Spleen (tissue), 13 donors: ENCODE measurements at regions of chr14 and their contacts with region 1.

Region 1: DNA sequence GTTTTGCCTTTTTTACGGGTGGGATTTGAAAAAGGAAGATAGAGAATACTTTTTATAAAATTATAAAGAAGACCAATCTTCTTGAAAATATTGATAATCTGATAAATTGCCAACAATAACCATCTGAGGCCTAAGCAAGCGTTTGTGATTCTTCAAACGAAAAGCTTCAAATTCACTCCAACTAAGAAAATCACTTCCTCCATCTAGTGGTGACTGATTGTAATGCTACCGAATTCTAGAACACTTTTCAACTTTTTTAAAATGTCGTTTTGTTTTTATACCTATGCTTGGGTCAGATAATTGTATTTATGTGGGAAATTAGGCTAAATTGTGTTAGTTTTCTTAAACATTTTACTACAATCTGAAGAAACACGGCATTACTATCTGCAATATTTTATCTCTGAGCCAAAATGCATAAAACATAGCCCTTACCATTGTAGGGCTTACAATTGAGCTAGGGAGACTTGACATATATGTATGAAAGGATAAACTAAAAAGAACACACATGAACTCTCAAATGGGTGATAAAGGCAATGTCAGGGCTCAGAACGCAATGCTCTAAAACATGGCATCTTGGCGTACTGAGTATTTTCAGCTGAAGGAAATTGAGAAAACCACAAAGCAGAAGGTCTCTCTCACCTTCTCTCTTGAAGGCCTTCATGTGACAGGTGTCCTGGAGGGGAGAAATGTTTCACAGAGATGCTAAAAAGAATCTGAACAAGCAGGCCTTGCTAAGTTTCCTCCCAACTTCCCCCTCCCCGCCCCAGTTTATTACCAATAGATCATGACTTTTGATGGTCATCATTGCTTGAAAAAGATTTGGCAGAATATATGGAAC is 36.8 kb upstream of the G2E3 start:
- DNase-seq: no peak
- H3K4me3 ChIP-seq: no peak overlapping the region
- H3K27ac ChIP-seq: no peak overlapping the region
- H3K4me1 ChIP-seq: peaks cover 0 to 12% (median 2%) of the 10 kb centered on the region in 6 donors
- H3K27me3 ChIP-seq: no peaks in the 10 kb centered on the region
- CTCF ChIP-seq: peak in 9 of 11 experiments; percentile 31 to 78 (median 64)
- POLR2A ChIP-seq: no peak

Region 2: GRCh38 chr14:30295980-30296379 is 226.1 kb before region 1 on chr14:
- intact Hi-C with region 1: no loop called
- DNase-seq: no peak
- H3K4me3 ChIP-seq: no peak overlapping the region
- H3K27ac ChIP-seq: no peak overlapping the region
- H3K4me1 ChIP-seq: no peaks in the 10 kb centered on the region
- H3K27me3 ChIP-seq: peaks cover 0 to 4% (median 0%) of the 10 kb centered on the region in 7 donors
- CTCF ChIP-seq: no peak
- POLR2A ChIP-seq: no peak

Region 3: GRCh38 chr14:30375296-30375892 is 146.7 kb before region 1 on chr14:
- intact Hi-C with region 1: loop called (anchors 5 kb)
- DNase-seq: peak; percentile 75
- H3K4me3 ChIP-seq: no peak overlapping the region
- H3K27ac ChIP-seq: no peak overlapping the region
- H3K4me1 ChIP-seq: no peaks in the 10 kb centered on the region
- H3K27me3 ChIP-seq: peaks cover 0 to 17% (median 0%) of the 10 kb centered on the region in 7 donors
- CTCF ChIP-seq: peak; percentile 18 to 85 (median 65)
- POLR2A ChIP-seq: no peak

Region 4: GRCh38 chr14:30673071-30673470 is 151.0 kb after region 1 on chr14:
- intact Hi-C with region 1: no loop called
- DNase-seq: no peak
- H3K4me3 ChIP-seq: no peak overlapping the region
- H3K27ac ChIP-seq: no peak overlapping the region
- H3K4me1 ChIP-seq: no peaks in the 10 kb centered on the region
- H3K27me3 ChIP-seq: no peaks in the 10 kb centered on the region
- CTCF ChIP-seq: no peak
- POLR2A ChIP-seq: no peak